ENCODE measurements at regions of chr17 and their contacts with region 1.

Region 1: DNA sequence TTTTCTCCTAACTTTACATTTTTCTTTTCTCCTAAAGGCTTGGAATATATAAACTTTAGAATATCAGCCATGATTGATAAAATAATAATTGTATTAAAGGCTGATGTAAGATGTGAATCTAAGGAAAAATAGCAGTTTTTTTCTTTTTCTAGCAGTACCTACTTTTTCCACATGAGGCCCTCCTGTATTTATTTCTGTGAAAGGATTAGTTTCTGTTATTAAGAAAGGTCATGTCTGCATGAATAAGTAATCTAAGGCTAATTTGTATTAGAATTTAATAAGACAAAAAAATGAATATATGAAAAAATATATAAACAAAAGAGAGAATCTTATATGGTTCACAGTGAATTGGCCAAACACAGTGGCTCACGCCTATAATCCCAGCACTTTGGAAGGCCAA is 85.3 kb downstream of the STXBP4 start:
- DNase-seq: no peak
- H3K4me3 Mint-ChIP-seq: no peak overlapping the region
- H3K27ac Mint-ChIP-seq: no peak overlapping the region
- H3K4me1 Mint-ChIP-seq: no peaks in the 10 kb centered on the region
- H3K27me3 Mint-ChIP-seq: no peaks in the 10 kb centered on the region
- CTCF ChIP-seq: peak; percentile 43

Region 2: DNA sequence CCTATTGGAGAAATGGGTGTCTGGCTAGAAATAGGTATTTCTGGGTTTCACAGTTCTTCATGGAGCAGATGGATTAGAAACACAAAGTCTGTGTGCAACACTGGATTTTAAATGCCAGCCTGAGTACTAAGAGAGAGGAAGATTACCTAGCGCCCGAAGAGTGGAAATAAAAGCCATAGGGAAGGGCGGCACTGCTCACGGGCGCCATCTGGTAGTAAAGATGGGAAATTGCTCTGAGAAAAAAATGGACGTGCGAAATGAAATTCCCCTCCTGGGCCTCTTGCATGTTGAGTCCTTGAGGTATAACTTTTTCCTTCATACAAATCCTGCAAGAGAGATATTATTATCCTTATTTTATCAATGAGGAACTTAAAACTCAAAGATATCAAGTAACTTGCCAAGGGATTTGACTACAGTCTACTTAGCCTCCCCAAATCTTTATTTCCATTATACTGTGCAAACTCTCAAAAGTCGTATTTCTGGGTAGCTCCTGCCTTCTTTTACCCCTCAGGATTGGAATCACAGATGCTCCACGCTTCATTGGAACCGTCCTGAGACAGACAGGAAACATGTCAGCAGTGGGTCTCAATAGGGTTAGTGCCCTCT is 295.0 kb after region 1 on chr17:
- CTCF ChIA-PET with region 1: interaction called, 28 read pairs
- POLR2A ChIA-PET with region 1: no interaction called
- intact Hi-C with region 1: loop called (anchors 1 kb)
- DNase-seq: peak; percentile 60
- H3K4me3 Mint-ChIP-seq: no peak overlapping the region
- H3K27ac Mint-ChIP-seq: no peak overlapping the region
- H3K4me1 Mint-ChIP-seq: peaks cover 5% of the 10 kb centered on the region
- H3K27me3 Mint-ChIP-seq: no peaks in the 10 kb centered on the region
- CTCF ChIP-seq: peak; percentile 75

Measured in MCF 10A (cell line).